ENCODE measurements at regions of chr12 and their contacts with region 1.

Region 1: GRCh38 chr12:104456417-104456949 is at the start of gene CHST11:
- DNase-seq: peak; percentile 93
- ATAC-seq: peak; percentile 94
- total RNA-seq, gene CHST11: 3.7 TPM

Region 2: DNA sequence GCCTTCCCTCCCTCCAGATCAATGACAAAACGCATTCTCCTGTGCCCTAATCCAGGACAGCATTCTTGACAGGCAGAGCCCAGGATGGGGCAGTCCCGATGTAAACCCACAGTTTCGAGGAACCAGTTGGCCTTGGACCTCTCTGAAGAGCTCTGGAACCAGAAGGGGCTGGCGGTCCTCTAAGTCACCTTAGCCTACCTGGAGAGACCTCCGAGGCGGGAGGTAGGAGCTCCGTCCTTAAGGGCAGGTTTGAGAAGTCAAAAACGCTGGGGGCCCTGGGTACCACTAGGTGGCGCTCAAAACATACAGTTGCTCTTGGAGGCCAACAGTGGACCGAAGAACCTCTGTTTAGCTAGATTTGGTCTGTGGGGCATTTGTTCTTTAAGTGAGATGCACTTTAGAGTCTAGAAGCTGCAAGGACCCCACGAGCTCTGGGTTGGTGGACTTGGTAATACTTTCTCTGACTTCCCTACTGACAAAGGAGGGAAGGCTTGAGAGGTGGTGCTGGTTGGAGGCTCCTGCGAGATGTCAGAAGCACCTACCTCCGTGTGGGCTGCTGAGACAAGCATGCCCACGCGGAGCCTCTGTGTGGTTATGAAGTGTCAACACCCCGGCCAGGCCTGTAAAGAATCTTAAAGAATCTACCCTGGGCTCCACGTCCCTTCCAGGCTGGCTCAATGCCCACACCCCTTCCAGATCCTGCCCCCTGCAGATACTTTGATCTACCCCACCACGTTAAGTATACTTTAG is 74.6 kb before region 1 on chr12:
- intact Hi-C with region 1: loop called (anchors 2 kb)
- DNase-seq: peak; percentile 75
- ATAC-seq: peak; percentile 84

Region 3: GRCh38 chr12:104505095-104505818 is 48.8 kb after region 1 on chr12:
- intact Hi-C with region 1: loop called (anchors 5 kb)
- DNase-seq: no peak
- ATAC-seq: no peak

Region 4: DNA sequence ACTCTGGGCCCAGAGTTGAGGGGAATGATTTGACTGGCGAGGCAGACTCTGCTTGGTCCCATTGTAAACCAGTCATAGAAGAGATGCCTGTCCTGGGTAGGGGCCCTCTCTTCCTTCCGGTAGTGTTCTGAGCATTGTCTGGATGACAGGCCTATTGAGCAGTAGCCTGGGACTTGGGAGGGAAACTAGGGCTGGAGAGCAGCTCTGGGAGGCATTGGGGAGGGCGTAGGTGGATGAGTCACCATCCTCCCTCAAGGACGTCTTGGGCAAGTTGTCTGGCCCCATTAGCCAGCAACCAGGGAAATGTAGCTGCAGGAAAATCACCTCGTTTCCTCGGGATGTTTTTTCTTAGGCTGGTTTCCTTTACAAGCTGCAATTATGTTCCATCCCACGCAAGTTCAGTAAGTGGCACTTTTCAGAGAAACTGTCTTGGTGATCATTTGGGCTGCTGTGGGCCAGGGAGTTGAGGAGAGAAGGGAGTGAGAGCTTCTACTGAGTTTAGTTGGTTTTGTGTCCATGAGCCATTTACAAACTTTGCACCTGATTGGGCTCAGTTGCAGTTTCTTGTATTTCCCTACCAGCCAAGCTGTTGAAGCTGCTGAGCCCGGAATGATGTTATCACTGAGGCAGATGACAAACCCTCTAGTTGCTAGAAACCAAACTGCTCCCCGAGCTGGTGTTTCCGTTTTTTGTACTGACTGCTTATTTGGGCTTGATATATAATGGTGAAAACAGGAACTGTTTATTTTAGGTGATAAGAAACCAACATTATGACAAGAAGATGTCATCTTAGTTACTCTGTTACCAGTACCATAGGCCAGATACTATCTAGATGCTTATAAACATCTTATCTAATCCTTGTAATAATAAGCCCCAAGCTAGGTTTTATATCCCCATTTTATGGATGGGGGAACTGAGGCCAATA is 147.8 kb after region 1 on chr12:
- intact Hi-C with region 1: loop called (anchors 10 kb)
- DNase-seq: no peak
- ATAC-seq: peak; percentile 88

Region 5: GRCh38 chr12:104632724-104633201 is 176.3 kb after region 1 on chr12:
- intact Hi-C with region 1: loop called (anchors 10 kb)
- DNase-seq: no peak
- ATAC-seq: no peak

Region 6: DNA sequence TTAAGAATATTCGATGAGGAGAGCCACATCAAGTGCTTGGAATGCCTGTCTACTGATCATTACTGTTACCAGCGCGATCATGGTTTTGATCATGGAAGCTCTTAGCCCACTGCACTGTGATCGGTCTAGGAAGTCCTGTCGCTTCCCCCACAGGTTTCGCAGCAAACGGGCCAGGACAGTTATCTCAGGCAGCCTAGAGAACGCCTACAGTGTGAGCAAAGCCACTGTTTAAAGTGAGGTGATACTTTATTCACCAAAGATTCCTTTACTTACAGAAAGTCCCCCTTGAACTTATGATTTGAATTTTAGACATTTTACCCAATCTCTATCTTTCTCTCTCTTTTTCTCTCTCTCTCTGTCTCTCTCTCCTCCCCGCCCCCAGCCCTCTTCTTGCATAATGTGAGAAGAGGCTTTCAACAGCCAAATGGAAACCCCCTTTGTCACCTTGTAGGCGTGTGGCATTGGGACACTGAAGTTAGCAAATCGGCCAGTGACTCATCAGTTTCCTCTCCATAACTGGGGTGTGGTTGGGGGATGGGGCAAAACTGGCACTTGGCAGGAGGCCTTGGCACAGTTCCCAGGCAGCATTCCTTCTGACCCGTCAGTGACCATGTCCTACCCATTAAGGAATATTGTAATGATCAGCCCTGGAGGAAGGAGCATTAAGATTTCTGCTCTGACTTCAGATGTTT is 215.1 kb after region 1 on chr12:
- intact Hi-C with region 1: loop called (anchors 5 kb)
- DNase-seq: peak; percentile 90
- ATAC-seq: peak; percentile 12

Measured in Right ventricle myocardium inferior (tissue), 1 donor.